Heart right ventricle (tissue), 16 donors: ENCODE measurements at regions of chr17 and their contacts with region 1.

Region 1: DNA sequence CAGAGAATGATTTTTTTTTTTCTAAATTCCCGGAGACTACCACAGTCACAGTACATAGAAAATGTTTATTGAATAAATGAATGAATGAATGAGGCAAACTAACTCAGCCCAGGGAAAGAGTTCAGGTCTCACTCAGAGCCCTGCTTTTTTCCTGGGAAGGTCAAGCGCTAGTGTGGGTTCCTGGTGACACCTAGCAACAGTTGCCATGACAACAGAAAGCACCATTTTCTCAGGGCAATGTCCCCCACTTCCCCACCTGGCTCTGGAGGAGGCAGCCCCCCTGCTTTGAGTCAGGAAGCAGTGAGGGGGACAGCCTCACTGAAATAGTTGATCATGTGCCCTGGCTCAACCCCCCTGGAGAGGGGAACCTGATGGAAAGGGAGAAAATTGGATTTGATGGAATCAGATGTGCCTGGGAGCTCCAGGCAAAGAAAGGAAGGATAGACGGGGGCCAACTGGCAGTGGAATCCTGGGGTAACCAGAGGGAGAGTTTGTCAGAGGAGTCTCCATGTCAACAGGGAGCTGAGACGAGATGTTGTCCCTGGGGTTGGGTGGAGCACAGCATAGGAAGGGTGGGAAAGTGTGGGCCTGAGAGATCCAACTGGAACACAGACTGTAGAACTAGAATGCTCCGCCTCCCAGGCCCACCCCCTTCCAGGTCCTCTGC is 242.2 kb upstream of the CCL2 start:
- DNase-seq: no peak
- ATAC-seq: no peak
- H3K4me3 ChIP-seq: no peak overlapping the region
- H3K27ac ChIP-seq: no peak overlapping the region
- H3K4me1 ChIP-seq: no peaks in the 10 kb centered on the region
- H3K27me3 ChIP-seq: peaks cover 0 to 10% (median 0%) of the 10 kb centered on the region in 7 donors
- CTCF ChIP-seq: no peak

Region 2: DNA sequence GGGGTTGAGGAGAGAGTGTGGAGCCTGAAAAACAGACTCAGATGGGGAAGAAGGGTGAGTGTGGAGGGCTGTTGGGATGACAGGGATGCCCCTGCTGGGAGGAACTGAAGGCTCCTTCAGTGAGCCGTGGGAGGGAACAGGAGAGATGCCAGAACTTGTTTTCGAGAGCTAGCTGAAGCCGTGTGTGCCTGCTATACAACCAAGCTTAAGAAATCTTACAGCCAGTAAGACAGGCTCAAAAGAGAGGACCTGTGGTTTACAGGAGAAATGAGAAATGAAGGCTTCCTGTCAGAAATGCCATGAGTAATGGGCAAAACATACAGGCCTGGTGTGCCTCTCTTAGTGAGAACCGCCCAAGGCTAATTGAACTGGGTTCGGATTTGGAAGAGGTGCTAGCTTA is 921.6 kb before region 1 on chr17:
- intact Hi-C with region 1: loop called in 1 of 10 experiments (anchors 10 kb)
- DNase-seq: no peak
- ATAC-seq: no peak
- H3K4me3 ChIP-seq: no peak overlapping the region
- H3K27ac ChIP-seq: no peak overlapping the region
- H3K4me1 ChIP-seq: no peaks in the 10 kb centered on the region
- H3K27me3 ChIP-seq: peaks cover 0 to 69% (median 43%) of the 10 kb centered on the region in 7 donors
- CTCF ChIP-seq: no peak

Region 3: GRCh38 chr17:33964344-33964979 is 48.4 kb before region 1 on chr17:
- intact Hi-C with region 1: loop called in 1 of 10 experiments (anchors 5 kb)
- DNase-seq: no peak
- ATAC-seq: peak in 1 of 8 donors; percentile 11
- H3K4me3 ChIP-seq: no peak overlapping the region
- H3K27ac ChIP-seq: no peak overlapping the region
- H3K4me1 ChIP-seq: peaks cover 0 to 22% (median 0%) of the 10 kb centered on the region in 9 donors
- H3K27me3 ChIP-seq: peaks cover 0 to 9% (median 3%) of the 10 kb centered on the region in 7 donors
- CTCF ChIP-seq: no peak

Region 4: DNA sequence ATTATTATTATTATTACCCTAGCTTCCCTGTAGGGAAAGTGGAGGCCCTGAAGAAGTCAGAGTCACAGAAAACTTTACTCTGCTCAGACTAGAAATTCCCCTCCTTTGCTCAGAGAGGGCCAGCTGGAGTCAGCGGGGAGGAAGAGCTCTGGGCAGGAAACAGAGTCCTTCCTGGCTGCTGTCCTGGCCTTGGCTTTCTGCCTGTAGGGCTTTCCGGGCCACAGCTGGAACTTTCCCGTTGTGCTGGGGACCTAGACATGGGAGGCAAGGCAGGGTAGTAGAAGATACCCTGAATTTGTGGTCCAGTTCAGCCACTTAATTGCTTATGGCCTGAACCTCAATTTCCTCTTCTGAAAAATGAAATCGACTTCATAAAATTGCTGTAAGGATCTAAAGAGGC is 228.2 kb after region 1 on chr17:
- intact Hi-C with region 1: no loop called
- DNase-seq: peak; percentile 85 to 88
- ATAC-seq: peak; percentile 72 to 90 (median 88)
- H3K4me3 ChIP-seq: no peak overlapping the region
- H3K27ac ChIP-seq: peak overlapping the region in 9 of 10 donors; percentile 23 to 93 (median 68)
- H3K4me1 ChIP-seq: peaks cover 6 to 100% (median 75%) of the 10 kb centered on the region in 9 donors
- H3K27me3 ChIP-seq: no peaks in the 10 kb centered on the region
- CTCF ChIP-seq: no peak